ENCODE measurements at regions of chr7 and their contacts with region 1.

Region 1: DNA sequence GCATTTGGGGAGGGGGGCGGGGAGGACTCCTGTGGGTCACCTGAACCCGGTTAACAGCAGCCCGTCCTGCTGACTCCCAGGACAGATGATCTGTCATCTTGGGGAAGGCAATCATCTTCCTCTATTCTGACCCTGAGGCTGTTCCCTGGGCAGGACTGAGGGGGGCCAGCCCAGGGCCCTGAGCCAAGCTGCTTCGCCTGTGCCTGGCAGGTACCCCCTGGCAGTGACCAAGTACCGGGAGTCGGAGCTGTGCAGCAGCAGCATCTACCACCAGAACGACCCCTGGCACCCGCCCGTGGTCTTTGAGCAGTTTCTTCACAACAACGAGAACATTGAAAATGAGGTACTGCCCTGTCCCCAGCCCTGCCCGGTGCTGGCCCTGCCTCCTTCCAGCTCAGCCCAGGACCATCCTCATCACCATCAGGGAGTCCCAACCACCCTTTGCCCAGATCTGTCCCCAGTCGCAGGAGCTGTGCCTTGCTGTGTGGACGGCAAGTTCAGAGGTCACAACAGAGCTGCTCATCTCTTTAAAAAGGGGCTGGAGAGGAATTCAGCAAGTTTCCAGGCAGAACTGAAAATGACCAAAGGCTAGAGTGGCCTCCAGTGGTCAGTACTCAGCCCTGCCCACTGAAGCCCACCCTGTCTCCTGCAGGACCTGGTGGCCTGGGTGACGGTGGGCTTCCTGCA is 8.1 kb downstream of the AOC1 start:
- DNase-seq: no peak
- ATAC-seq: no peak
- H3K4me3 ChIP-seq: no peak overlapping the region
- H3K27ac ChIP-seq: no peak overlapping the region
- H3K4me1 ChIP-seq: no peaks in the 10 kb centered on the region
- H3K27me3 ChIP-seq: peaks cover 0 to 1% of the 10 kb centered on the region in 2 donors
- CTCF ChIP-seq: no peak

Region 2: GRCh38 chr7:150778738-150779301 is 81.6 kb before region 1 on chr7:
- intact Hi-C with region 1: loop called in 1 of 2 experiments (anchors 10 kb)
- DNase-seq: peak; percentile 68 to 90 (median 82)
- ATAC-seq: peak; percentile 96
- H3K4me3 ChIP-seq: no peak overlapping the region
- H3K27ac ChIP-seq: no peak overlapping the region
- H3K4me1 ChIP-seq: peaks cover 5 to 28% of the 10 kb centered on the region in 2 donors
- H3K27me3 ChIP-seq: no peaks in the 10 kb centered on the region
- CTCF ChIP-seq: peak; percentile 76 to 87

Measured in left lung (tissue), 14 donors.